PC-9 (cell line): ENCODE measurements at regions of chr2 and their contacts with region 1.

Region 1: GRCh38 chr2:201860636-201861066 is 54.3 kb downstream of the CDK15 start:
- DNase-seq: peak; percentile 54 to 57
- H3K4me3 ChIP-seq: no peak overlapping the region
- H3K27ac ChIP-seq: no peak overlapping the region
- H3K4me1 ChIP-seq: peaks cover under 1% of the 10 kb centered on the region; the same call in 1 of the 2 replicates
- H3K27me3 ChIP-seq: no peaks in the 10 kb centered on the region
- CTCF ChIP-seq: peak; percentile 86

Region 2: GRCh38 chr2:201827621-201828020 is 33.0 kb before region 1 on chr2:
- CTCF ChIA-PET with region 1: no interaction called
- POLR2A ChIA-PET with region 1: no interaction called
- intact Hi-C with region 1: loop called (anchors 1 kb)
- DNase-seq: no peak
- H3K4me3 ChIP-seq: no peak overlapping the region
- H3K27ac ChIP-seq: no peak overlapping the region
- H3K4me1 ChIP-seq: no peaks in the 10 kb centered on the region; the same call in 1 of the 2 replicates
- H3K27me3 ChIP-seq: no peaks in the 10 kb centered on the region
- CTCF ChIP-seq: no peak

Region 3: DNA sequence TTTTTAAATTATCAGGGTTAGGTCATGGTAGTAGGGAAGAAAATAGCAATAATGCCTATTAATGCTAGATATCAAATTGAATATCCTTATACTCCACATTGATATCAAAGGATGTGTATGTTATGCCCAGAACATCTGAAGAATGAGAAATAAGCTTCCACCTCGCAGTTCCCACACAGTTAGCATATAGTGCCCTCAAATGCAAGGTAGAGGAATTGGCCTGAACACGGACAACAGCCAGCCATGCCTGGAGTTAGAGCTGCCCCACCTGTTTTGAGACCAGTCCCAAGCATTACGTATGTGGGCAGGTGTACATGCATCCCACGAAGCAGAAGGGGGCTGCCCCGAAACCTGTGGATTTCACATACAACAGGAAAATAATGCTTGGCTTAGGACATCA is 298.1 kb after region 1 on chr2:
- CTCF ChIA-PET with region 1: no interaction called
- POLR2A ChIA-PET with region 1: no interaction called
- intact Hi-C with region 1: loop called (anchors 5 kb)
- DNase-seq: no peak
- H3K4me3 ChIP-seq: no peak overlapping the region
- H3K27ac ChIP-seq: no peak overlapping the region
- H3K4me1 ChIP-seq: no peaks in the 10 kb centered on the region
- H3K27me3 ChIP-seq: no peaks in the 10 kb centered on the region
- CTCF ChIP-seq: no peak; the same call in 1 of the 2 replicates

Region 4: DNA sequence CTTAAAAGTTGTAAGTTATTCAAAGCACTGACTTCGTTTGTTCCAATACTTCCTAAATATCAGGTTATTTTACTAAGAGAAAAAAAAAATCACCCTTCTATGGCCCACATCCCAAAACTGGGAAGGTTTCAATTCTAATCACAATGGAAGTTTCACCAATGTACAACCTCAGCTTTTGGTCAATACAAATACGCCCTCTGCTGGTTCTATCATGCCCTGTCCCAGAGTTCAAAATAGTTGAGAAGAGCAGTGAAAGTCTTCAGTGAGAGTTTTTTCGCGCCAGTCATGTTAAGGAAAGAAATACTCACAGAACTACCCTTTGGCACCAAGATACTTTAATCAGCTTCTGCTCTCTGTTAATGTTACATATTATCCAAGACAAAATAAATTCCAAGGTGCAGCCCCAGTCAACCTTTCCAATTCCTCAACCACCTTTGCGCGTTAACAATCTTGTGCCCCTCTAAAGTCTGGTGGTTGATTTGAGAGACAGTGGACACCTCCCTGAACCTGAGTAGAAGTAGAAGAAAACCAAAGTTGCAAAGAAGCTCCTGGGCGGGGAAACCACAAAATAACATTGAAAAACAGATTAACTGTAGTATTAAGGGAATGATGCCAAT is 317.8 kb after region 1 on chr2:
- CTCF ChIA-PET with region 1: interaction called, 3 read pairs
- POLR2A ChIA-PET with region 1: no interaction called
- intact Hi-C with region 1: loop called (anchors 1 kb)
- DNase-seq: peak in 1 of 2 experiments; percentile 29
- H3K4me3 ChIP-seq: no peak overlapping the region
- H3K27ac ChIP-seq: no peak overlapping the region
- H3K4me1 ChIP-seq: no peaks in the 10 kb centered on the region
- H3K27me3 ChIP-seq: no peaks in the 10 kb centered on the region
- CTCF ChIP-seq: peak; percentile 84